Motor neuron (in vitro differentiated cells): ENCODE measurements at regions of chr4 and their contacts with region 1.

Region 1: GRCh38 chr4:85968945-85969819 is 390.7 kb downstream of the MAPK10 start:
- ATAC-seq: peak; percentile 43 to 70 (median 55)
- H3K4me3 ChIP-seq: no peak overlapping the region
- H3K27ac ChIP-seq: no peak overlapping the region
- H3K4me1 ChIP-seq: no peaks in the 10 kb centered on the region

Region 2: DNA sequence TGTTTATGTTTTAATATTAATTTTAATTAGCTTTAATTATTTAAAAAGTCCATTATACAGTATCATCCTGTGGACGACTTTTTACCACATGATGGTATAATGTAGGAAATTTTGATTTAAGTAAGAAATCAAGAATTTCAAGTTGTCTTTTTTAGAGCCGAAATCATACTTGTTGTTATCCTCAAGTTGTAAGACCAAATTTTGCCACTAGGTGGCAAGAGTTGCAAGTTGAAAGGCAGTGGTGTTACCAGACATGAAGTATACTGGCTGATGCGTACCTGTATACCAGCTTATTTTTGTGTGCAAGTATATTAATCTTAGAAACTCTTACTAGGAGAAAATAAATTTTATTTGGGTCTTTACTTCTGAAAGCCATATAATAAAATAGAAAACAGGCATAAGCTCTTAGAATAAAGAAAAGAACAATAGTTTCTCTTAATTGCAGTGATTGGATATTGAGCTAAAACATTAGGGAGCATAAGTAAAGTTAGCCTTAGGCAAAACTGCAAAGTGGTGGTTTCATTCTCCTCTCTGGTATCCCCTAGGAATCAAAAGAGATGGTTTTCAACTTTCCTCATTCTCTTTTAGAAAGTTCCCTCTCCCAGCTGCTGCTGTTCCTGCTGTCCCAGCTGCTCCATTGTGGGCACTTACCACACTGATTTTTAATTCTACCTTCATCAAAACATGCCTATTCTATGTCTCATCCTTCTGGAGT is 884.6 kb before region 1 on chr4:
- in situ Hi-C with region 1: loop called in 1 of 9 experiments (anchors 25 kb)
- ATAC-seq: peak in 4 of 8 experiments; percentile 54 to 75 (median 66)
- H3K4me3 ChIP-seq: no peak overlapping the region
- H3K27ac ChIP-seq: no peak overlapping the region
- H3K4me1 ChIP-seq: no peaks in the 10 kb centered on the region

Region 3: DNA sequence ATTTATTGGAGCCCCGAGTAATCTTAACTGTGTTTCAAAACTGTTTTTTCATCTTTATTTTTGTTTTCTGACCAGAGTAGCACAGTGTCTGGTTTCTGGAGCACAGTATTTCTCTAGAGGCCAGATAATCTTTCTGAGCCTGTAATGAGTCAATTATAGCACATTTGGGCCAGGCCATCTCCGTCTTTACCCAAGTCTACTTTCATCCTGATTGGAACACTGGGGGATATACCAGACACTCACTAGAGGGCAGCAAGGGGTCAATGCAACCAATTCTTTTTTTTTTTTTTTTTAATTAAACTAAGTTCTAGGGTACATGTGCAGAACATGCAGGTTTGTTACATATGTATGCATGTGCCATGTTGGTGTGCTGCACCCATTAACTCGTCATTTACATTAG is 212.2 kb before region 1 on chr4:
- in situ Hi-C with region 1: loop called in 1 of 9 experiments (anchors 25 kb)
- ATAC-seq: peak in 3 of 8 experiments; percentile 43 to 65 (median 53)
- H3K4me3 ChIP-seq: no peak overlapping the region
- H3K27ac ChIP-seq: no peak overlapping the region
- H3K4me1 ChIP-seq: no peaks in the 10 kb centered on the region